ENCODE measurements at regions of chr14 and their contacts with region 1.

Region 1: DNA sequence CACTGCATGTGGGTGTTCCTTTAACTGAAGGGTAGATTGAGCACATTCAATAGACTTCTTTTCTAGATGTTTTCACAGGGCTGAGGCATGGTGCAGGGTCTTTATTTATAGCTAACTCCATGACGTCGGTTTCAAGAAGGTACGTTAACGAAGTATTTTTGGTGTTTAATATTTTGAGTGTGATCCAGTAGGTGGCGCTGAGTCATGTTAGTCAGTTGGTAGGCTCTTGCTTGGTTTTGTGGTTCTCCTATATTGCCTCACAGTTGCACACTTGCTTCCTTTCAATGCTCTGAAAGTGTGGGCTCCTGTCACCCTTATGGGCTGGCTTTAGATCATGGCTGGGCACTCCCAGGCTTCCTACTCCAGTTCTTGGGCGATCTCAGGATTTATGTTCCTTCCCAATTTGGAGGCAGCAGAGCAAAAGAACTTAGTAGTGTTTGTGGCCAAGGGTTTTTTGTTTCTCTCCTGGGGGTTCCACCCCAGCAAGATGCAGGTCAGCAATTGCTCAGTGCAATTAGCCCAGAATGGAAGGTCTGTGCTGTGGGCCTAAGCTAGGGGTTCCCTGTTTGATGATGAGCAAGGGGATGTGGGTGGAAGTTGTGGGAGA is 471.6 kb upstream of the FOXG1 start:
- DNase-seq: no peak
- H3K4me3 Mint-ChIP-seq: no peak overlapping the region
- H3K27ac Mint-ChIP-seq: no peak overlapping the region
- H3K4me1 Mint-ChIP-seq: no peaks in the 10 kb centered on the region
- H3K27me3 Mint-ChIP-seq: no peaks in the 10 kb centered on the region

Region 2: GRCh38 chr14:27845241-27845850 is 449.6 kb before region 1 on chr14:
- CTCF ChIA-PET with region 1: no interaction called
- intact Hi-C with region 1: no loop called
- DNase-seq: no peak
- H3K4me3 Mint-ChIP-seq: no peak overlapping the region
- H3K27ac Mint-ChIP-seq: no peak overlapping the region
- H3K4me1 Mint-ChIP-seq: no peaks in the 10 kb centered on the region
- H3K27me3 Mint-ChIP-seq: no peaks in the 10 kb centered on the region

Region 3: GRCh38 chr14:28217743-28218142 is 77.2 kb before region 1 on chr14:
- CTCF ChIA-PET with region 1: no interaction called
- intact Hi-C with region 1: no loop called
- DNase-seq: no peak
- H3K4me3 Mint-ChIP-seq: no peak overlapping the region
- H3K27ac Mint-ChIP-seq: no peak overlapping the region
- H3K4me1 Mint-ChIP-seq: no peaks in the 10 kb centered on the region
- H3K27me3 Mint-ChIP-seq: no peaks in the 10 kb centered on the region

Region 4: GRCh38 chr14:28608851-28609828 is 314.2 kb after region 1 on chr14:
- CTCF ChIA-PET with region 1: no interaction called
- intact Hi-C with region 1: loop called (anchors 2 kb)
- DNase-seq: peak; percentile 52
- H3K4me3 Mint-ChIP-seq: no peak overlapping the region
- H3K27ac Mint-ChIP-seq: no peak overlapping the region
- H3K4me1 Mint-ChIP-seq: no peaks in the 10 kb centered on the region
- H3K27me3 Mint-ChIP-seq: no peaks in the 10 kb centered on the region

Region 5: GRCh38 chr14:28635387-28635786 is 340.4 kb after region 1 on chr14:
- CTCF ChIA-PET with region 1: no interaction called
- intact Hi-C with region 1: loop called (anchors 10 kb)
- DNase-seq: peak; percentile 8
- H3K4me3 Mint-ChIP-seq: no peak overlapping the region
- H3K27ac Mint-ChIP-seq: no peak overlapping the region
- H3K4me1 Mint-ChIP-seq: no peaks in the 10 kb centered on the region
- H3K27me3 Mint-ChIP-seq: no peaks in the 10 kb centered on the region

Measured in activated naive CD4-positive, alpha-beta T cell treated with anti-CD3 and anti-CD28 coated beads for 36 hours (primary cell).